ENCODE measurements at regions of chr1 and their contacts with region 1.

Region 1: DNA sequence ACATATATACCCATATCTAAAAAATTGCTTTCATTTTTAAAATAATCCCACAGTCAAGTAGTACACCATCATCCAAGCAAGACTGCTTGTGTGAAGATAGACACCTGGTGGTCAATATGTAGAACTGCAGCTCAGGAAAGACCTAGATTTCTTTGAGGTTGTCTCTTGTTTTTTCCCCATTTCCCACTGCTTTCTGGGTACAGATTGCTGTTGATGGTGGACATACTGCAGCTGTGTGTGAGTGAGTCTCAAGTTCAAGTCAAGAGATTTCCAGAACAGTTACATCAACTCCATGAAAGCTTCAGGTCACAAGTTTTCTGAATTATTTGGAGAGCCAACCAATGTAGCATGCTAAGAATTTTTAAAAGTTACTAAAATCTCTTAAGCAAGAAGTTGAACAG is 306.4 kb downstream of the DUSP10 start:
- DNase-seq: no peak
- ATAC-seq: peak; percentile 50 to 67
- H3K4me3 ChIP-seq: no peak overlapping the region
- H3K27ac ChIP-seq: no peak overlapping the region
- H3K4me1 ChIP-seq: peaks cover 6 to 9% of the 10 kb centered on the region in 2 donors
- H3K27me3 ChIP-seq: no peaks in the 10 kb centered on the region
- CTCF ChIP-seq: peak; percentile 59 to 90 (median 81)
- POLR2A ChIP-seq: no peak

Region 2: GRCh38 chr1:220810179-220810653 is 625.3 kb before region 1 on chr1:
- in situ Hi-C with region 1: loop called in 2 of 4 experiments (anchors 10 to 25 kb)
- intact Hi-C with region 1: loop called (anchors 5 kb)
- DNase-seq: peak; percentile 48 to 62
- ATAC-seq: peak; percentile 69 to 82
- H3K4me3 ChIP-seq: no peak overlapping the region
- H3K27ac ChIP-seq: no peak overlapping the region
- H3K4me1 ChIP-seq: no peaks in the 10 kb centered on the region
- H3K27me3 ChIP-seq: no peaks in the 10 kb centered on the region
- CTCF ChIP-seq: peak; percentile 72 to 86 (median 81)
- POLR2A ChIP-seq: no peak

Region 3: GRCh38 chr1:220873868-220874655 is 561.4 kb before region 1 on chr1:
- in situ Hi-C with region 1: loop called in 3 of 4 experiments (anchors 5 to 10 kb)
- intact Hi-C with region 1: loop called (anchors 1 kb)
- DNase-seq: no peak
- ATAC-seq: peak; percentile 21 to 32
- H3K4me3 ChIP-seq: no peak overlapping the region
- H3K27ac ChIP-seq: peak overlapping the region in 1 of 4 donors; percentile 5
- H3K4me1 ChIP-seq: peaks cover 8 to 17% of the 10 kb centered on the region in 2 donors
- H3K27me3 ChIP-seq: no peaks in the 10 kb centered on the region
- CTCF ChIP-seq: peak; percentile 54 to 75 (median 70)
- POLR2A ChIP-seq: no peak

Region 4: GRCh38 chr1:221263831-221264767 is 171.4 kb before region 1 on chr1:
- in situ Hi-C with region 1: loop called (anchors 10 to 25 kb)
- intact Hi-C with region 1: loop called (anchors 5 kb)
- DNase-seq: peak; percentile 18 to 34
- ATAC-seq: peak; percentile 73 to 80
- H3K4me3 ChIP-seq: no peak overlapping the region
- H3K27ac ChIP-seq: peak overlapping the region; percentile 30 to 62 (median 45)
- H3K4me1 ChIP-seq: peaks cover 4 to 10% of the 10 kb centered on the region in 2 donors
- H3K27me3 ChIP-seq: no peaks in the 10 kb centered on the region
- CTCF ChIP-seq: peak; percentile 12 to 58 (median 52)
- POLR2A ChIP-seq: no peak

Region 5: DNA sequence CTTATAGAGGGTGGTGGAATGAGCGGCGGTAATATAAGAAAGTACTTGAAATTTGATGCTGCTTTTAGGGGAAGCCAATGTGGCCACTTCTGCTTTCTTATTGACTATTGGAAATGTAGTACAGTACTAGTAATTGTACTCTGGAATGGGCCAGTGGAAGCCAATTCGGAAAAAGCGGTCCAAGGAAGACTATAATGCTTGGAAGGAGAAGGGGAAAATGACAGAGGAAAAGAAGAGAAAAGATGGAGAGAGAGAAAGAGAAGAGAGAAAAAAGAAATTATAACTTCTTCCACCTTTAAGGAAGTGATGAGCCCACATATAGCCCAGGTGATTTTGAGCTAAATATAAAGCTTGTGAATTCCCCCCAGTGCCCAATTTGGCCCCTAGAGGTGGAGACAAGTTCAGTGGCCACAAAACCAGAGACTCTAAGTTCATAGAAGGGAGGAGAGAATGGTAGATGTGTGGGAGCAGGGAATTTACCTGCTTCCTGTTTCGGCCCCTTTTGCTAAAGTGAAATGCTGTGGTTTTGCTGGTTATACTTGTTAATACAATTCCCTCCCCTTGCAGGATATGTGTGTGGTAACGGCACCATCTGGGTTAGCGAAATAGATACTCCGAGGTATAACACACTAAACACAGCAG is 342.0 kb after region 1 on chr1:
- in situ Hi-C with region 1: no loop called
- intact Hi-C with region 1: no loop called
- DNase-seq: no peak
- ATAC-seq: no peak
- H3K4me3 ChIP-seq: no peak overlapping the region
- H3K27ac ChIP-seq: no peak overlapping the region
- H3K4me1 ChIP-seq: no peaks in the 10 kb centered on the region
- H3K27me3 ChIP-seq: no peaks in the 10 kb centered on the region
- CTCF ChIP-seq: no peak
- POLR2A ChIP-seq: no peak

Measured in gastrocnemius medialis (tissue), 4 donors.